ENCODE measurements at regions of chr17 and their contacts with region 1.

Region 1: DNA sequence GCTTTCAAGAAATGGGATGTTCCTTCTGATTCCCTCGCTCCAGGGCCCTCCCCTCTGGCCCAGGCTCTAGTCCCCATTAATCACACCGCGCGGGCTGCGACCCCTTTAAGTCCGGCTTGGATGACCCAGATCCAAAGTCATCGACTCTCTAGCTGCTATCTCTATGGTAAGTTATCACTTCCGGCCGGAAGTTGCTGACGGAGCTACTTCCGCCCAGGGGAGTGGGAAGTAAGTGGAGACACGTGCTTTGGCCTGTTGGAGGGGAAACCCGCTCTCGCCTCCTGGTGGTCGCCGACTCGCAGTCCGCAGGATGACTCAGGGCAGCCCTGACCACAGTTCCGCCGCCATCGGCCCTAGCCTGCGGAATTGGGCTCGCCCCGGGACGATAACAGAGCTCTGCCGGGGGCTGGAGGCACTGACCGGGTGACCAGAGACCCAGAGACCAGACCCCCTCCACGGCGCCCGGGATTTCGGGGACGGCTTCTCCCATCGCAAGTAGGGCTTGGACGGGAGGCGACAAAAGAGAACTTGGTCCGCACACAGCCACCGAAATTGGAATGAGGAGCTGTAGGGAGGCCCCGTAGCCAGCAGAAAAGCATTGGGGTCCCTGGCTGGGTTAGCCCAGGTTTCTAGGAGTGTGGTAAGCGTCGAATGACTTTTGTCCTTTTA is 52.2 kb upstream of the SEC14L1 start:
- DNase-seq: peak; percentile 89 to 93 (median 93)
- ATAC-seq: peak; percentile 96
- H3K4me3 ChIP-seq: peak overlapping the region; percentile 80
- H3K4me1 ChIP-seq: peaks cover 5% of the 10 kb centered on the region
- CTCF ChIP-seq: peak; percentile 23

Region 2: DNA sequence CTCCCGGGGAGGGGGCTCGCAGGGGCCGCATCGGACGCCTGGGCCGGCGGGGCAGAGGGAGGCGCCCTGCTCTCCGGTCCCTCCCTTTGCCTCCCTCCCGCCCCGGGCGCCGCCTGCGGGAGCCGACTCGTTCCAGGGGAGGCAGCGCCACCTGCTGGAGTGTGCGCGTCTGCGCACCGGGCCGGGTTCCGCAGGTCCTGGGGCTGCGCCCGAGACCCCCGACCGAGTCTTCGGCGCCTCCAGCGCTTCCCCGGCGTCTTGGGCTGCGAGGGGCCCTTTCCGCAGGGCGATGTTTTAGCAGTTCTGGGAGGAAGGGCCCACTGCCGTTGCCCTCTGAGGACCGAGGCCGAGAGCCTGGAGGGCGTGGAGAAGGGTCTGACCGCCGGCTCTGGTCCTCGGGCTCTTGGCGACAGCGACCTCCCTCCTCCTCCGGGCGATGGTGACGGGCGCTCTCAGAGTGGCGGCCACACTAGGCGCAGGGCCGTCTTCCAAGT is 158.5 kb after region 1 on chr17:
- intact Hi-C with region 1: loop called (anchors 5 kb)
- DNase-seq: peak; percentile 87 to 89 (median 87)
- ATAC-seq: peak; percentile 98
- H3K4me3 ChIP-seq: no peak overlapping the region
- H3K4me1 ChIP-seq: peaks cover 14% of the 10 kb centered on the region
- CTCF ChIP-seq: peak; percentile 96